ENCODE measurements at regions of chr2 and their contacts with region 1.

Region 1: DNA sequence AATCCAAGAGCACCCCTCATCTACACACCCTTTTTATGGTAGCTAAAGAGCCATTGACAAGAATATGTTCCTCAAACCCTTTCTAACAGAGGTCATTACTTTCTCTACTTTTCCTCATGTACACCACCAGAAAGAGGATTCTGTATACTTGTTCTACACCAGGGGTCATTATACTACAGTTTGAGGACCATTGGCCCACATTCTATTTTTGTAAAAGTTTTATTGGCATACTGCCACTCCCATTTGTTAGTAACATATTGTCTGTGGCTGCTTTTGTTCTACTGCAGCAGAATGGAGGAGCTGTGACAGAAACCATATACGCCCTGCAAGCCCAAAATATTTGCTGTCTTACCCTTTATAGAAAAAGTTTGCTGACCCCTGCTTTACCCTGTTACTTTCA is 14.3 kb downstream of the HTR2B start:
- DNase-seq: no peak
- CTCF ChIP-seq: peak; percentile 22

Region 2: GRCh38 chr2:231094736-231095346 is 15.7 kb before region 1 on chr2:
- CTCF ChIA-PET with region 1: interaction called, 17 read pairs
- POLR2A ChIA-PET with region 1: no interaction called
- DNase-seq: no peak
- CTCF ChIP-seq: no peak

Region 3: DNA sequence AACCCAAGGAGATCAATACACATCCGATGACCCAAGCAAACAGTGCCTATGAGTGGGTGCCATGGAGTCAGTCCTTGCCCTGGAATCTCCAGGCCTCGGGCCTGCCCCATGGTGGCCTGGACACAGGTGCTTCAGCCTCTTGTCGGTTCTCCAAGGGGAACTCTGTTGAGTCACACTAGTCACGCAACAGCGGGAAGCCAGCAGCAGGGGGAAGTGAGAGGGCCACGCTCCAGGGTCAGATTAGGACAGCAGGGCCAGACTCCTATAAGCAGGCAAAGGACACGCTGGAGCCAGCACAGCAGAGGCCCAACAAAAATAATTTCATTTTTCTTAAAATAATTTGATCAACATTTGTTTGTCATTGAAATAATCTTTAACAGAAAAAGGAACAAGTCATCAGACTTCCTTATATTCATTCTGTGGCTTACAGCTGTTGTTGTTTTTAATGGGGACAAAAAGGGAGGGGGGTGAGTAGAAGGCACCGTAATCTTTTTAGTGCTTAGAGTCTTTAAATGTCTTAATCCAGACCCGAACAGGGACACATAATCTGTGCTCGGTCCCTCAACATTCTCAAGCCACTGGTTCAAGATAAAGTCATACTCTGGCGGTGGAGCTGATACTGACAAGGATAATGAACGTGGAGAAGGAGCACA is 71.4 kb after region 1 on chr2:
- CTCF ChIA-PET with region 1: no interaction called
- POLR2A ChIA-PET with region 1: no interaction called
- DNase-seq: peak; percentile 69
- CTCF ChIP-seq: no peak

Measured in GM10248 (cell line).